ENCODE measurements at regions of chr17 and their contacts with region 1.

Region 1: DNA sequence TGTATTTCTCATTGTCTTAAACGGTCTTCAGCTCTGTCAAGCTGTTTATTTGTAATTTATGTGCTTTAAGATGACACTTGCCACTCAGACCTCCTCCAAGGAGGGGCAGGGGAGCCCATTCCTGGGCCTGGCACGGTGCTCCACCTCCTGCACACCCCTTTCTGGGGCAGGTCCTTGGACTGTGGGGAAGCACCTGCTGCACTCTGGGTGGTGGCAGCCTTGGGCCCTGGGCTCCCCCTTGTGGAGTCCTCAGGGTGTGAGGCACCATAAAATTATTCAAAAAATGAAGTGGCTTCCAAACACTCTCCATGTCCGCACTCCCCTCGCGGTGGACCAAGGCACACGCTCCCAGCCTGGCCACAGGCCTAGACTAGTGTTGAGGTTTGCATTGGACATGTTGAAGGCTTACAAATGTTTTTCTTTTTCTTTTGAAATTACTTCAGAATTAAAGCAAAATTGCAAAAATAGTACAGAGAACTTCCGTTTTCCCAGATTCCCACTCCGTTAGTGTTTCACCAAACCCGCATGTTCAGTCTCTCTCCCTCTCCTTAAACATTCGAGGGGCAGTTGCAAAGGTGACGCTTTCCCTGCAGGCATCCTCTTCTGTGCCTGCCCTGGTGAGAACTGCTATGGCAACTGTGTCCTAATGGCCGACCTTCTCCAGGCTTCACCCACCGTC is 32.4 kb downstream of the FOXK2 start:
- DNase-seq: peak; percentile 74
- H3K4me3 ChIP-seq: no peak overlapping the region
- H3K27ac ChIP-seq: no peak overlapping the region
- H3K4me1 ChIP-seq: peaks cover 12% of the 10 kb centered on the region
- H3K27me3 ChIP-seq: no peaks in the 10 kb centered on the region
- CTCF ChIP-seq: peak; percentile 63 to 86

Region 2: DNA sequence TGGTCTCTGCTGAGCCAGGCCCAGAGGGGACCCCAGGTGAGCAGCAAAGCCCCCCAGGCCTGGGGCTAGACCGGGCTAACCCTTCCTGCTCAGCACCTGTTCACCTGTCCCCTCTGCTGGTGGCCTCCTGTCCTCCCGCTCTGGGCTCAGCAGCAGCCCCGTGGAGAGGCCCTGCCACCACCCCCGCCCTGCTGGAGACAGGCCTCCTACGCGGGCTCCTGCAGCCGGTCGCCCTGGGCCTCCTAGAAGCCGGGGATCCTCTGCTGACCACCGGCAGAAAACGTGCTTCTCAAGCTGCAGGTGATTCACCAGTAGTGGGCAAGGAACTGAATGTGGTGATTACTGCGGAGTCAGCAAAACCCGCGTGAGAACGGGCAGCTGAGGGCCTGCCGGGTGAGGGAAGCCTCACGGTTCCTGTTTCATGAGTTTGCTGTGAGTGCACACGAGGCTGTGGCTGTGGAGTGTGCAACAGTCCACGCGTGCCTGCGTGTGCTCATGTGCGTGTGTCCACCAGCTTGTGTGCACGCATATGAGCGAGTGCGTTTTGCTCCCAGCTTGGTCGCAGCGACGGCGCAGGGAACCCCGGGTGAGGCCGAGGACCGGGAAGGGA is 219.1 kb before region 1 on chr17:
- CTCF ChIA-PET with region 1: no interaction called
- dilution Hi-C with region 1: loop called (anchors 10 kb)
- in situ Hi-C with region 1: no loop called
- intact Hi-C with region 1: no loop called
- DNase-seq: peak; percentile 46
- H3K4me3 ChIP-seq: peak overlapping the region in 2 of 3 experiments; percentile 18 to 46
- H3K27ac ChIP-seq: no peak overlapping the region
- H3K4me1 ChIP-seq: peaks cover 46% of the 10 kb centered on the region
- H3K27me3 ChIP-seq: no peaks in the 10 kb centered on the region
- CTCF ChIP-seq: no peak

Region 3: GRCh38 chr17:82351716-82352488 is 200.0 kb before region 1 on chr17:
- CTCF ChIA-PET with region 1: no interaction called
- dilution Hi-C with region 1: no loop called
- in situ Hi-C with region 1: loop called (anchors 10 kb)
- intact Hi-C with region 1: loop called (anchors 1 kb)
- DNase-seq: peak; percentile 64
- H3K4me3 ChIP-seq: no peak overlapping the region
- H3K27ac ChIP-seq: no peak overlapping the region
- H3K4me1 ChIP-seq: peaks cover 20% of the 10 kb centered on the region
- H3K27me3 ChIP-seq: no peaks in the 10 kb centered on the region
- CTCF ChIP-seq: peak; percentile 86 to 94

Region 4: DNA sequence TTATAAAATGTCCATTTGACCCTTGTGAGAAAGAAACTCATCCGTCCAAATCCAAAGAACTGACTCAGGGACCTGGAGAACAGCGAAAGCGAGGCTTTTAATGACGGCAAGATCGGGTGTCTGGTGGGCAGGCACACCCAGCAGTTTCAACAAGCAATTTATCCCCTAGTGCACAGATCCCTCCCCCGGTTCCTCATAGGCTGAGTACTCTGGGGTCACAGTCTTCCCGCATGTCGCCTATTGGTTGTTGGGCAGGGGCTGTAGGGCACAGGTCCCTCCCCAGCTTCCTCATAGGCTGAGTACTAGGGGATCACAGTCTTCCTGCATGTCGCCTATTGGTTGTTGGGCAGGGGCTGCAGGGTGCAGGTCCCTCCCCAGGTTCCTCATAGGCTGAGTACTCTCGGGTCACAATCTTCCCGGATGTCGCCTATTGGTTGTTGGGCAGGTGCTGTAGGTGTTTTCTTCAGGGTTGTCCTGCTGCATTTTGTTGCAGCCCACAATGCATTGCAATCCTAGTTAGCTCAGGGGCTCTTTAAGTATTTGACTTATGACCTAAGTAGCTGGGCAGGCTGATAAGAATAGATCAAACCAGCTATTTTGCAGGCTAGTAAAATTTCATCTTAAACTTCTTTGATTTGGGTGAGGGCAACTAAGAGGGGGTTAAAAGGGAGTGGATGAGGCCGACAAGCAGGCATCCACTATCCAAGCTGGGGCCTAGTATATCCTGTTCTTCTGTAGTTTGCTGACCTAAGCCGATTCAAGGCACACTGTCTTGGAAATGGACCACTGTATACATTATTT is 184.0 kb before region 1 on chr17:
- CTCF ChIA-PET with region 1: no interaction called
- dilution Hi-C with region 1: loop called (anchors 10 kb)
- in situ Hi-C with region 1: no loop called
- intact Hi-C with region 1: no loop called
- DNase-seq: no peak
- H3K4me3 ChIP-seq: no peak overlapping the region
- H3K27ac ChIP-seq: no peak overlapping the region
- H3K4me1 ChIP-seq: peaks cover 7% of the 10 kb centered on the region
- H3K27me3 ChIP-seq: peaks cover 26% of the 10 kb centered on the region
- CTCF ChIP-seq: no peak

Region 5: DNA sequence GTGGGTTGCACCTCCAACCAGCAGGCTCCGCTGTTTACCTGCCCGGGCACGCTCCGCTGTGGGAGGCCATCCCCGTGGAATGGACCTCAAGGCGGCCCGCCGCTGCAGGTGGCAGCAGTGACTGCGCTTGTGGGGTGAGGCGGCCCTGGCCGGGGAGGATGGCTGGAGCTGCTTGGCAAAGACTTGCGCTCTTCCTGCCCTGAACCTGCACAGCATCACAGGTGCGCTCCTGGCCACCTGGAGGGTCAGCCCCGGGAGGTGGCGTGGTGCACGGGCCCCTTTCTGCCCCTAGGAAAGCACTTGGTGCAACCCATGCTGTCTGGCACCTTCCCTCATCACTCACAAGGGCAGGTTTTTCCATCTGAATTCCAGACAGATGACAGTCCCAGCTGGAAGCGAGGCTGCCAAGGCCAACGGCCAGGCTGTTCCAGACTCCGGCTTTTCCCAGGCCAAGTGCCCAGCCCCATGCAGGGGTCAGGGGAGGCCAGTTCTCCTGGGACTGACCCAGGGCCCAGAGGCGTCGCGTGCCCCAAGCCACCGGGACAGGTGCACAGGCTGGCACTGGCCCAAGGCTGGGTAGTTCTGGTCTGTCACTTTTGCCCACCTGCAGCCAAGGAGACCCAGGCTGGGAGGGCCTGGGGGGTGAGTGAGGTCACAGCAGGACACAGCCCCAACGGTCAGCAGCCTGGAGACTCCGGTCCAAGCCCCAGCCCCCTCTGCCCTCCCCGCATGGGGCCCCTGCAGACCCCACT is 167.0 kb before region 1 on chr17:
- CTCF ChIA-PET with region 1: no interaction called
- dilution Hi-C with region 1: no loop called
- in situ Hi-C with region 1: no loop called
- intact Hi-C with region 1: loop called (anchors 1 kb)
- DNase-seq: peak; percentile 84
- H3K4me3 ChIP-seq: peak overlapping the region in 1 of 3 experiments; percentile 14
- H3K27ac ChIP-seq: no peak overlapping the region
- H3K4me1 ChIP-seq: peaks cover 24% of the 10 kb centered on the region
- H3K27me3 ChIP-seq: no peaks in the 10 kb centered on the region
- CTCF ChIP-seq: peak; percentile 15 to 57

Region 6: DNA sequence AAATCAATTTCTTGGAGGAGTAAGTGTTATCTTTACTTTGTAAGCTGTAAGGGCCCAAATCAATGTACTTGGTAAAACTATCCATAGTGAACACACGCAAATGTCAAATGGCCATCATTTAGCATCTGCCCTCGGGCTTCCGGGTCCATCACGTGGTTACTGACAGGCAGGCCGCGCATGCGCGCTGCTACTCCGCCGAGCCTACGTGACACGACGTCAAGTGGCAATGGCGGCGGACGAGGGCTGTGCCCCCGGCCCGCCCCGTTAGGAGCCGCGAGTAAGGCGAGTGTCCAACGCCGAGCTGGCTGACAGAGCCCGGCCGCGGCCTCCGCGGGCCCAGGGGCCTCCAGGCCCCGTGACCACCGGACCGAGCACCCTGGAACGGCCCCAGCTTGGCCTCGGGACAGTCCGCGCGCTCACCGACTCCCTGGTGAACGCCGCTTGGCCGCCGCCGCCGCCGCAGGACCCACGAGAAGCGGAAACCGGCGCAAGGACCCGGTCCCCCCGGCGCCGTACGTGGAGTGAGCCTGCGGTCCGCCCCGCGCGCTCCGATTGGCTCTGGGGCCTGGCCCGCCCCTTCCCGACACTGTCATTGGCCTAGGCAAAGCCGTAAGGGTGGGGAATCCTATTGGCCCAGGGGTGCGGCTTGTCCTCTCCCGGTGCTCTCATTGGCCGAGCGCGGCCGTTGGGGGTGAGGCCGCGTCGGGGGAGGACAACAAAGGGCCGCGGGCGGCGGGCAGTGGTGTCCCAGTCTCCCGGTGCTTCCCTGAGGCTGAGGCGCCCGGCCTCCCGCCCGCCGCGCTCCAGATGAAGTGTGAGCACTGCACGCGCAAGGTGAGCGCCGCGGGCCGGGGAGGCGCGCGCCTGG is 93.7 kb before region 1 on chr17 and contains the start of gene NARF:
- CTCF ChIA-PET with region 1: no interaction called
- dilution Hi-C with region 1: no loop called
- in situ Hi-C with region 1: no loop called
- intact Hi-C with region 1: loop called (anchors 1 kb)
- DNase-seq: peak; percentile 99
- H3K4me3 ChIP-seq: peak within 1 kb of the TSS; percentile 43 to 88 (median 79)
- H3K27ac ChIP-seq: peak within 1 kb of the TSS; percentile 81
- H3K4me1 ChIP-seq: peaks cover 7% of the 10 kb centered on the region
- H3K27me3 ChIP-seq: no peaks in the 10 kb centered on the region
- CTCF ChIP-seq: no peak
- total RNA-seq, gene NARF: 25.0 to 31.5 TPM

Region 7: GRCh38 chr17:82494236-82495055 is 57.5 kb before region 1 on chr17:
- CTCF ChIA-PET with region 1: no interaction called
- dilution Hi-C with region 1: no loop called
- in situ Hi-C with region 1: no loop called
- intact Hi-C with region 1: loop called (anchors 1 kb)
- DNase-seq: peak; percentile 95
- H3K4me3 ChIP-seq: no peak overlapping the region
- H3K27ac ChIP-seq: no peak overlapping the region
- H3K4me1 ChIP-seq: peaks cover 24% of the 10 kb centered on the region
- H3K27me3 ChIP-seq: no peaks in the 10 kb centered on the region
- CTCF ChIP-seq: peak; percentile 85 to 95

Region 8: GRCh38 chr17:82583720-82584234 is 31.9 kb after region 1 on chr17:
- CTCF ChIA-PET with region 1: no interaction called
- dilution Hi-C with region 1: no loop called
- in situ Hi-C with region 1: no loop called
- intact Hi-C with region 1: no loop called
- DNase-seq: no peak
- H3K4me3 ChIP-seq: no peak overlapping the region
- H3K27ac ChIP-seq: no peak overlapping the region
- H3K4me1 ChIP-seq: no peaks in the 10 kb centered on the region
- H3K27me3 ChIP-seq: no peaks in the 10 kb centered on the region
- CTCF ChIP-seq: no peak

Measured in mammary epithelial cell (primary cell).